Activated CD8-positive, alpha-beta T cell treated with anti-CD3 and anti-CD28 coated beads for 36 hours (primary cell): ENCODE measurements at regions of chr11 and their contacts with region 1.

Region 1: GRCh38 chr11:76626921-76627401 is 43.6 kb downstream of the LRRC32 start:
- DNase-seq: peak; percentile 94
- ATAC-seq: peak; percentile 23
- H3K4me3 Mint-ChIP-seq: peak overlapping the region; percentile 35
- H3K27ac Mint-ChIP-seq: peak overlapping the region; percentile 93
- H3K4me1 Mint-ChIP-seq: peaks cover 52% of the 10 kb centered on the region
- H3K27me3 Mint-ChIP-seq: peaks cover 2% of the 10 kb centered on the region
- CTCF ChIP-seq: no peak

Region 2: GRCh38 chr11:76588455-76589325 is 38.3 kb before region 1 on chr11:
- CTCF ChIA-PET with region 1: interaction called, 3 read pairs
- POLR2A ChIA-PET with region 1: interaction called, 7 read pairs
- intact Hi-C with region 1: loop called (anchors 5 kb)
- DNase-seq: peak; percentile 90
- ATAC-seq: peak; percentile 84
- H3K4me3 Mint-ChIP-seq: no peak overlapping the region
- H3K27ac Mint-ChIP-seq: peak overlapping the region; percentile 84
- H3K4me1 Mint-ChIP-seq: peaks cover 55% of the 10 kb centered on the region
- H3K27me3 Mint-ChIP-seq: peaks cover 7% of the 10 kb centered on the region
- CTCF ChIP-seq: no peak

Region 3: GRCh38 chr11:76637491-76638269 is 10.7 kb after region 1 on chr11:
- CTCF ChIA-PET with region 1: interaction called, 3 read pairs
- POLR2A ChIA-PET with region 1: interaction called, 13 read pairs
- intact Hi-C with region 1: no loop called
- DNase-seq: peak; percentile 41
- ATAC-seq: peak; percentile 8
- H3K4me3 Mint-ChIP-seq: no peak overlapping the region
- H3K27ac Mint-ChIP-seq: peak overlapping the region; percentile 4
- H3K4me1 Mint-ChIP-seq: peaks cover 16% of the 10 kb centered on the region
- H3K27me3 Mint-ChIP-seq: peaks cover 22% of the 10 kb centered on the region
- CTCF ChIP-seq: no peak

Region 4: DNA sequence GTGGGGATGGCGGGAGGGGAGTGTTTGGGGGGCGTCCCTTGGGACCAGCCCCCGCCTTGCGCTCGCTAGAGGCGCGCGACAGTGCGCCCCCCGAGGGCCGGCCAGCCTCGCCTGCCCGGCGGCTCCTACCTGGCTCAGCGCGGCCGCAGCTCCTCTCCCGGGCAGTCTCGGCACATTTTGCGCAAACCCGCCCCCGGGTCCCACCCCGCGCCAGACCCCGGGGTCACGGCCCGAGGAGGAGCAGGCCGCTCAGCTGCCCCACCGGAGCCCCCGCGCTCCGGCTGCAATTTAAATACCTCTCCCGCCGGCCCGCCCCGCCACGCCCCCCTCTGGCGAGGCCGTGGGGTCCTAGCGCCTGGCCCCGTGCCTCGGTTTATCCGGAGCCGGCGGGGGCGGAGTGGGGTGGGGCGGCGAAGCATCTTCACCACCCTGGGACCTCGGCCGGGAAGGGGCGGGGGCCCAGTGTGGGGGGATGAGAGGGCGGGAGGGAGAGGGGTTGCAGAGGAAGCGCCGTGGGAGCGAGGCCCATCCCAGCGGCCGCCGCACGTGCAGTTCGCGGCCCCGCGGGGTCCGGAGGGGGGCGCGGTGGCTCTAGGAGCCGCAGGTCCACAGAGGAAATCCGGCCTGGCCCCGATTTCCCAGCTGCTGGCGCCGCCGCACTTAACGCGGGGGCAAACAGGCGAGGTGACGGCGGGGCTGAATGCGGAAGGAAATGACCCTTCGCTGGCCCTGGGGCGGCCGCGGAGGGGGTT is 43.7 kb after region 1 on chr11 and contains the start of gene LRRC32:
- CTCF ChIA-PET with region 1: interaction called, 3 read pairs
- POLR2A ChIA-PET with region 1: interaction called, 8 read pairs
- intact Hi-C with region 1: loop called (anchors 5 kb)
- DNase-seq: peak; percentile 49
- ATAC-seq: peak; percentile 8
- H3K4me3 Mint-ChIP-seq: peak within 1 kb of the TSS; percentile 73
- H3K27ac Mint-ChIP-seq: peak within 1 kb of the TSS; percentile 36
- H3K4me1 Mint-ChIP-seq: peaks cover 49% of the 10 kb centered on the region
- H3K27me3 Mint-ChIP-seq: peaks cover 19% of the 10 kb centered on the region
- CTCF ChIP-seq: peak; percentile 28
- total RNA-seq, gene LRRC32: 23.2 to 24.5 TPM